ENCODE measurements at regions of chr16 and their contacts with region 1.

Region 1: GRCh38 chr16:87062569-87063442 is 254.4 kb downstream of the C16orf95 start:
- DNase-seq: peak; percentile 88
- H3K27ac ChIP-seq: no peak overlapping the region
- CTCF ChIP-seq: peak; percentile 87

Region 2: DNA sequence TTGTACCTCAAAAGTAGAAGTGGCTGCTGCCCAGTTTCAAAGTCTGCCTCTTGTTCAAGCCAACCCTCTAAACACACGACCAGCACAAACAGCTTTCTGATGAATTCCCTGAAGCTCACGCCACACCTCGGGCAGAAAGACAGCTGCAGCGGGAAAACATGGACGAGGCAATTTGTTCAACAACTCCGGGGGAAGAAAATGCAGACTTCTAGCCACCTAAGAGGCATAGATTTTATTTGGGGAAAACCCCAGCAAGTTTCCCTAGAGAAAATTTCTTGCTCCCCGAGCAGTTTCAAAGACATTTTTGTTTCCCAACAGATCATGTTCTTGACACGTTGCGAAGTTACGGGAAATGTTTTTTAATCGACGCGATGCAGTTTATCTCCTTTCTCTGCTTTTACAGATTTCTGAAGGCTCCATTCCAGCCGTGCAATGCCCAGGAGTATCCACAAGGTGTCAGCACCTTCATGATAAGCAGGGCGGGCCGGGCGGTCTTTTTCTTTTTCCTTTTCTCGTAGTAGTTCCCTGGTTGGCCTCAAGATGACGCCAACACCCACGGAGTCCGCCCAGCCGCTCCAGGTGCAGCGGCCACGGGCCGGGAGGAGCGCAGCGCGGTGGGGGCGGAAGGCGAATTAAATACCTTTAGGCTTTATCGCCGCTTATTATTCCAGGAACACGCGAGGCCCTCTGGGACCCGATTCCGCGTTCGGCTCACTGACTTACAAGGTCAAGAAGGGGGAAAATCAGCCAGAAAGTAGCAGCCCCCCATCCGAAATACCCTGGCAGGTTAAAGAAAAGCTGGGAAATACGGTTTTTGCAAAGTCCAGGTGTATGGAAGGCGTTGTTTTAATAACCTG is 499.1 kb before region 1 on chr16:
- CTCF ChIA-PET with region 1: interaction called, 39 read pairs
- POLR2A ChIA-PET with region 1: no interaction called
- DNase-seq: peak; percentile 76
- H3K27ac ChIP-seq: peak overlapping the region; percentile 44
- CTCF ChIP-seq: peak; percentile 100

Region 3: GRCh38 chr16:86604436-86605193 is 458.2 kb before region 1 on chr16:
- CTCF ChIA-PET with region 1: no interaction called
- POLR2A ChIA-PET with region 1: no interaction called
- DNase-seq: no peak
- H3K27ac ChIP-seq: no peak overlapping the region
- CTCF ChIP-seq: no peak

Region 4: GRCh38 chr16:86865524-86866301 is 197.1 kb before region 1 on chr16:
- CTCF ChIA-PET with region 1: no interaction called
- POLR2A ChIA-PET with region 1: no interaction called
- DNase-seq: peak; percentile 15
- H3K27ac ChIP-seq: peak overlapping the region; percentile 19; the same call in 1 of the 2 replicates
- CTCF ChIP-seq: no peak

Region 5: DNA sequence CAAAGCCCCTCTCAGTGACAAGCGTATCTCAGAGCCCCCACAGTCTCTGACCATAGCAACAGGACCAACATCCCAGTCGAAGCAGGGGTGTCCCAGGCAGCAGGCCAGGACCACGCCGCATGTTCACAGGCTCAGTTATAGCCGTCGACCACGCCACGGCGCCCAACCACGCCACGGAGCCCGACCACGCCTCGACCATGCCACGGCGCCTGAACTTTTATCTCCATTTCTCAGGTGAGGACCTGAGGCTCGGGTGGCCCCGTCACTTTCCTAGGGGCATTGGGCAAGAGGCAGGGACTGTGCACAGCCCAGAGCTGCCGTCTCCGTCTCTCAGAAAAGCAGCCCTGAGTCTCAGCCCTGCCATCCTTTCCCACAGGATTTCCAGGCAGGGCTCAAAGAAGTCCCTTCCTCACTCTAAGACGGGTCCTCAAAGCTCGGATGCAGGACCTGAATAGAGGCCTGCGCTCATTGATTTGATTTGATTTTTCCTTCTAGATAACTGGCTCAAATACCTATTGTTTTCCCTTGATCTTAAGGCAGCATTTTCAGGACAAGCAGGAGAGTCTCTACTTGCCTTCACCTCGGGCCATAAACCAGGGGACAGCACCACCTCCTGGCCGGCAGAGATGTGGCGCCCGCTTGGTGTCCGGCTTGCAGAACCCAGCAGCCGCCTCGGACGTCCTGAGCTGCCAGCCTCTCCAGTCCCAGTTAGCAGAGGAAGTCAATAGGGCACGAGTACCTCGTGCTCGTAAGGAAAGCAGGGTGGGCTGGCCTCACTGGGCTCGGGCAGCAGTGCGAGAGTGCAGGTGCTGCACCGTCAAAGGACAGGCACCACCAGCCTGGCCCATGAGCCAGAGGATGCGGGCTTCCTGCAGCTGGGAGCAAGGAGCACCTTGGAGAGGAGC is 215.6 kb after region 1 on chr16:
- CTCF ChIA-PET with region 1: interaction called, 13 read pairs
- POLR2A ChIA-PET with region 1: no interaction called
- DNase-seq: peak; percentile 84
- H3K27ac ChIP-seq: peak overlapping the region; percentile 47
- CTCF ChIP-seq: peak; percentile 85